A549 (cell line): ENCODE measurements at regions of chr9 and their contacts with region 1.

Region 1: GRCh38 chr9:71709384-71709783 is 58.9 kb downstream of the CEMIP2 start:
- DNase-seq: no peak
- ATAC-seq: no peak
- H3K4me3 ChIP-seq: no peak overlapping the region
- H3K27ac ChIP-seq: no peak overlapping the region
- H3K4me1 ChIP-seq: peaks cover under 1% of the 10 kb centered on the region; the same call in 1 of the 3 replicates
- CTCF ChIP-seq: no peak
- EP300 ChIP-seq: no peak
- POLR2A ChIP-seq: no peak
- RAD21 ChIP-seq: no peak

Region 2: DNA sequence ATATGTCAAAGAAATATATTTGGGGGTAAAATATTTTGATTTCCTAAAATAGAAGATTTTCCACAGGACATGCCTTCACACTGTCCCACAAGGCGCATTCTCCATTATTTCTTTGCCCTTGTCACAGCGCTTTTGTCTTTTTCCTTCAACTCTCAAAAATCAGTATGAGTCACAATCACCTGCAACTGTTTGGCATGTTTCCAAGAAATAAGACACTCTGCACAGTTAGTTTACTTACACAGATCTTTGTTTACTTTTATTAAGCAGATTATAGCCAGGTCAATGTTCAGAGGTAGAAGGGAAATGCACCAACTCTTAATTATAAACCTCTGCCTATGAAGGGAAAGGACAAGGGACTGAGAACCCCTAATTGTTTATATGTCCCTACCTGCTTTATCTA is 49.4 kb after region 1 on chr9:
- CTCF ChIA-PET with region 1: interaction called, 11 read pairs
- POLR2A ChIA-PET with region 1: no interaction called
- DNase-seq: peak in 1 of 2 experiments; percentile 65
- ATAC-seq: no peak
- H3K4me3 ChIP-seq: peak overlapping the region; percentile 18; the same call in 1 of the 3 replicates
- H3K27ac ChIP-seq: peak overlapping the region; percentile 67 to 91
- H3K4me1 ChIP-seq: peaks cover 97% of the 10 kb centered on the region
- CTCF ChIP-seq: no peak
- EP300 ChIP-seq: no peak
- POLR2A ChIP-seq: no peak
- RAD21 ChIP-seq: 0 out of 5 replicates have a peak, but pooled peaks of 1 of the 2 experiments have one; percentile 11